PC-9 (cell line): ENCODE measurements at regions of chr5 and their contacts with region 1.

Region 1: DNA sequence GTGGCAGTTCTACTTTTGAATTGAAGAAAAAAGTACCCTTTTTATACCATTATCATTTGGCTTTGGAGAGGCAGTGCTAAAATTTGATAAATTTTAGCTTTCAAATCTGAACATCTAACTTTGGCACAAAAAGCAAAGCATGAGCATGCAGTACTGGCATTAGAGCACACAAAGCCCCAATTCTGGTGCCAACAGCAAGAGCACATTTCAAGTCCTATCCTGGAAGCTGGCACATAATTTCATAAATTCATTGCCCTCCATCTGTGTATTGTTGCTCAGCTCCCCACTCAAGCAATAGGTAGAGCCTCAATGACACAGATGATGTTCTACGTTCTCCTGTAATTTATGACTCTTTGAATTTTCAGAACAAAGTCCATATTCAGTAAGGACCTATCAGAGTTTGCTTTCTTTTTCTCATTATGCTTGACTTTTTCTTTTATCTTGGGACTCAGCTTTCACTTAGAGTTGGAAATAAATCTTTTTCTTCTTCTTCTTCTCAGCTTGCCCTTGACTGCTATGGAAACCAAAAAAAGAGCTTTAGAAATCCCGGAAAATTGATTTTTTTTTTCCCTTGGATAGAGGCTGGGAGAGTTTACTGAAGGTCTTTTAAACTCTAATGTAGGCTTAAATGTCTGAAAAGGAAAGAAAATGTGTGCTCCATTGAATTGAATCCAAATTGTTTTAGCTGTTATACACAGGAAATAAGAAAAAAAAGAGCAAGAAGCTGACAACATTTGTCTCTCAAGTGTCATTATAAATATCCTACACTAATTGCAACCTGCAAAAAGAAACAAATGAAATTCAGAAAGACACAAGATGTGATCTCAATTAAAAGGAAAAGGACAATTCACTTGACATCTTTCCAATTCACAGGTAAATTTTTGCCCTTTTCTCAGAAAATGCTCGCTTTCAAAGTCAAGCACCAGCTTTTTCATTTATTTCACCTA is 380.8 kb upstream of the CDH18 start:
- DNase-seq: no peak
- H3K4me3 ChIP-seq: no peak overlapping the region
- H3K27ac ChIP-seq: no peak overlapping the region
- H3K4me1 ChIP-seq: no peaks in the 10 kb centered on the region
- H3K27me3 ChIP-seq: no peaks in the 10 kb centered on the region
- CTCF ChIP-seq: no peak

Region 2: DNA sequence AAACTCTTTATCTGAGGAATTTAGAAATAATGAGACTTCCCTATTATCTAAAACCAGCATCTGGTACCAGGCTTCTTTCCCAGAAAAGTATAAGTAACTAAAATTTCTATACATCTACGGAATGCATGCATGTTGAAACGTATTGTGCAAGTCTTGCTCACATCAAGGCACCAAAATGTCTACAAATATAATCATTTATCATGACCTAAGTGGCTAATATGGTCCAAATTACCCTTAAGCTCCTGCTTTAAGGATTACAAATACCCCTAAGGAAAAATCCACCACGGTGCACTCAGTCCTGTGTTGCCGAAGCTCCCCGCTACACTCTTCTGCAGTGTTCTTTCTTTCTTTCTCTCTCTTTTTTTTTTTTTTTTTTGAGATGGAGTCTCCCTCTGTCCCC is 667.1 kb before region 1 on chr5:
- CTCF ChIA-PET with region 1: interaction called, 15 read pairs
- POLR2A ChIA-PET with region 1: no interaction called
- intact Hi-C with region 1: no loop called
- DNase-seq: no peak
- H3K4me3 ChIP-seq: no peak overlapping the region
- H3K27ac ChIP-seq: no peak overlapping the region
- H3K4me1 ChIP-seq: no peaks in the 10 kb centered on the region
- H3K27me3 ChIP-seq: no peaks in the 10 kb centered on the region
- CTCF ChIP-seq: no peak